Naive thymus-derived CD8-positive, alpha-beta T cell (primary cell): ENCODE measurements at regions of chr7 and their contacts with region 1.

Region 1: DNA sequence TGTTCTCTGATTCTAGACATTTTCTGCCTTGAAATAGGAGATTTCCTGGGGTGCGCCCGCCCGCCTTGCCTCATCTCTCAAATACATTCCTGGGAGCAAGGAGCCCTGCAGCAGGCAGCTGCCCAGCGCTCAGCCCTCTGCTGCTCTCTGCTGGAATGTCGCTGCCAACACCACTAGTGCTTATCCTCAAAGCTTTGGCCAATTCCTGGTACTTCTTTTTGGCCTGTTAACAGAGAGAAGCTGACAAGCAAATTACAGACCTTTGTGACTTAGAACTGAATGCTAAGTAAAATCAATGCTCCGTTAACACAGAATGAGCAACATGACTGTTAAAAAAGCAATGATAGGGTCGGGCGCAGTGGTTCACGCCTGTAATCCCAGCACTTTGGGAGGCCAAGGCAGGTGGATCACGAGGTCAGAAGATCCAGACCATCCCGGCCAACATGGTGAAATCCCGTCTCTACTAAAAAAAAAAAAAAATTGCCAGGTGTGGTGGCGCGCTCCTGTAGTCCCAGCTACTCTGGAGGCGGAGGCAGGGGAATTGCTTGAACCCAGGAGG is 41.9 kb upstream of the SYPL1 start:
- DNase-seq: peak; percentile 58 to 85 (median 72)
- ATAC-seq: peak; percentile 90 to 98
- H3K4me3 Mint-ChIP-seq: peak overlapping the region in 9 of 10 donors; percentile 4 to 68 (median 54)
- H3K27ac Mint-ChIP-seq: peak overlapping the region in 2 of 10 donors; percentile 24 to 73
- H3K4me1 Mint-ChIP-seq: peaks cover 2 to 10% (median 6%) of the 10 kb centered on the region in 4 donors
- H3K27me3 Mint-ChIP-seq: peaks cover 7 to 22% (median 15%) of the 10 kb centered on the region in 5 donors

Region 2: DNA sequence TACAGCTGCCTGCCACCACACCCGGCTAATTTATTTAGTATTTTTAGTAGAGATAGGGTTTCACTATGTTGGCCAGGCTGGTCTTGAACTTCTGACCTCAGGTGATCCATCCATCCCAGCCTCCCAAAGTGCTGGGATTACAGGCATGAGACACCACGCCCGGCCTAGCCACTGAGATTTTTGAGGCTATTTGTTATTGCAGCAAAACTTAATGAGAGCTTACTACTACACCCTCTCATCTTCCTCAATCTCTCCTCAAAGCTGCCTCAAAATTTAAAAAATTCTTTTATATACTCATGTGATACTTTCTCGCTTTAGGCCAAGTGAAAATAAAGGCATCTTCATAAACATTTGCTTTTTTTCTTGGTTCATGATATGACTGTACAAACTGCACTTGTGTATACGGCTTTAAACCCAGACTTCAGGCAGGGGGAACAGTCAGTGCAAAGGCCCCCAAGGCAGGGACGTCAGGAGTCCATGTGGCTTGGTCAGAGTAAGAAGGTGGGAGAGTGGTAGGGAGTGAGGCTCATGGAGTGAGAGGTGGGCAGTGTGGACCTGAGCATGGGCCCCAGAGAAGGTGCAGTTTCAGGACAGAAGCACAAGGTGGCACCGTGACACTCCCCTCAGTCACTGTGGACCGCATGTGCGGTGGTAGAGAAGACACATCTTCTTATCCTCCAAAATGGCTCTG is 97.3 kb before region 1 on chr7:
- POLR2A ChIA-PET with region 1: interaction called, 28 read pairs
- DNase-seq: peak; percentile 47 to 86 (median 68)
- ATAC-seq: peak; percentile 95 to 96
- H3K4me3 Mint-ChIP-seq: peak overlapping the region in 7 of 10 donors; percentile 38 to 58 (median 49)
- H3K27ac Mint-ChIP-seq: peak overlapping the region in 1 of 10 donors; percentile 53
- H3K4me1 Mint-ChIP-seq: peaks cover 7 to 43% (median 27%) of the 10 kb centered on the region in 4 donors
- H3K27me3 Mint-ChIP-seq: no peaks in the 10 kb centered on the region

Region 3: GRCh38 chr7:106094800-106095199 is 59.2 kb before region 1 on chr7:
- POLR2A ChIA-PET with region 1: no interaction called
- DNase-seq: no peak
- ATAC-seq: no peak
- H3K4me3 Mint-ChIP-seq: no peak overlapping the region
- H3K27ac Mint-ChIP-seq: peak overlapping the region in 2 of 10 donors; percentile 13 to 36
- H3K4me1 Mint-ChIP-seq: peaks cover 6 to 38% (median 14%) of the 10 kb centered on the region in 4 donors
- H3K27me3 Mint-ChIP-seq: no peaks in the 10 kb centered on the region

Region 4: DNA sequence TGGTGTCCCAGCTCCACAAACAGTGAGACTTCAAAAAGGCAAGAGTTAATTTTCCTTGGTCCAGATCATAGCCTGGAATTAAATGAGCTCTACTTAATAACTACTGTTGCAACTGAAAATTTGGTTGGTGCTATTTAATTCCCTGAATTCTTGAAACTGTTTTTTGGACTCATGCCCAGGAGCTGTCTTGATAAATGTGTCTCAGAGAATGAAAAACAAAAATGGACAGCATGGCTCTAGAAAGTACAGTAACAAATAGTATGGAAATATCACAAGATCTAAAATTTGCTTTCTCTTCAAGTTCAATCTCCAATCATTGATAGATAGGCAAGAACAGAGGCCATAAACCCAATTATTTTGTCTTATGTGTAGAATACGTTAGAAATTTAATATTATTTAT is 464.5 kb after region 1 on chr7:
- POLR2A ChIA-PET with region 1: no interaction called
- DNase-seq: no peak
- ATAC-seq: no peak
- H3K4me3 Mint-ChIP-seq: no peak overlapping the region
- H3K27ac Mint-ChIP-seq: no peak overlapping the region
- H3K4me1 Mint-ChIP-seq: peaks cover 0 to 2% (median 0%) of the 10 kb centered on the region in 4 donors
- H3K27me3 Mint-ChIP-seq: peaks cover 0 to 10% (median 2%) of the 10 kb centered on the region in 5 donors